ENCODE measurements at regions of chr6 and their contacts with region 1.

Region 1: DNA sequence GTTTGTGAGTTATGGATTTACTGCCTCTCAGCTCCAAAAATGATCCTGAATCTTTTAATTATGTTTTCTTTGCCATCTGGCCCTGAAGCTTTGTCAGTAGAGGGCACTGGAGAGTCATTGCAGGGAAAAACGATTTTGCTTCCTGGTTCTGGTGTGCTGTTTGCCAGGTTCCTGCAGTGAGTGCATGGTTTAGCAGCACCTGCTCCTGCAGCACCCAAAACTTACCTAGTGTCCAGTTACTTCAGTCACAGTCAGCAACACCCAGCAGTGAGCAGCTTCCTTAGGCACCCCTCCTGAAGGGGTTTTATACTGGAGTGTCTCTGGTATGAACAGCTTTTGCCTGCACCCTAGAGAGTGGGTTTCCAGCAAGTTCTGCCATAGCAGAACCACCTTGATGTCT is 6.0 kb upstream of the TRIM26 start:
- DNase-seq: peak; percentile 7 to 79 (median 49)
- ATAC-seq: peak; percentile 68
- H3K4me3 ChIP-seq: no peak overlapping the region
- H3K4me3 Mint-ChIP-seq: no peak overlapping the region
- H3K27ac ChIP-seq: no peak overlapping the region
- H3K27ac Mint-ChIP-seq: peak overlapping the region; percentile 34
- H3K4me1 ChIP-seq: peaks cover 8% of the 10 kb centered on the region
- H3K4me1 Mint-ChIP-seq: peaks cover 18% of the 10 kb centered on the region
- H3K27me3 ChIP-seq: no peaks in the 10 kb centered on the region
- H3K27me3 Mint-ChIP-seq: no peaks in the 10 kb centered on the region
- CTCF ChIP-seq: peak; percentile 91

Region 2: GRCh38 chr6:30206799-30207618 is 12.2 kb before region 1 on chr6:
- CTCF ChIA-PET with region 1: interaction called, 41 read pairs
- POLR2A ChIA-PET with region 1: interaction called, 8 read pairs
- intact Hi-C with region 1: no loop called
- DNase-seq: no peak
- ATAC-seq: no peak
- H3K4me3 ChIP-seq: no peak overlapping the region
- H3K4me3 Mint-ChIP-seq: no peak overlapping the region
- H3K27ac ChIP-seq: no peak overlapping the region
- H3K27ac Mint-ChIP-seq: peak overlapping the region; percentile 18
- H3K4me1 ChIP-seq: peaks cover 41% of the 10 kb centered on the region
- H3K4me1 Mint-ChIP-seq: peaks cover 81% of the 10 kb centered on the region
- H3K27me3 ChIP-seq: no peaks in the 10 kb centered on the region
- H3K27me3 Mint-ChIP-seq: no peaks in the 10 kb centered on the region
- CTCF ChIP-seq: no peak

Region 3: GRCh38 chr6:30238174-30238795 is 19.0 kb after region 1 on chr6:
- CTCF ChIA-PET with region 1: interaction called, 15 read pairs
- POLR2A ChIA-PET with region 1: interaction called, 3 read pairs
- intact Hi-C with region 1: no loop called
- DNase-seq: peak in 5 of 9 experiments; percentile 18 to 69 (median 31)
- ATAC-seq: peak; percentile 63
- H3K4me3 ChIP-seq: no peak overlapping the region
- H3K4me3 Mint-ChIP-seq: no peak overlapping the region
- H3K27ac ChIP-seq: no peak overlapping the region
- H3K27ac Mint-ChIP-seq: no peak overlapping the region
- H3K4me1 ChIP-seq: no peaks in the 10 kb centered on the region
- H3K4me1 Mint-ChIP-seq: no peaks in the 10 kb centered on the region
- H3K27me3 ChIP-seq: no peaks in the 10 kb centered on the region
- H3K27me3 Mint-ChIP-seq: peaks cover 32% of the 10 kb centered on the region
- CTCF ChIP-seq: peak; percentile 40

Region 4: DNA sequence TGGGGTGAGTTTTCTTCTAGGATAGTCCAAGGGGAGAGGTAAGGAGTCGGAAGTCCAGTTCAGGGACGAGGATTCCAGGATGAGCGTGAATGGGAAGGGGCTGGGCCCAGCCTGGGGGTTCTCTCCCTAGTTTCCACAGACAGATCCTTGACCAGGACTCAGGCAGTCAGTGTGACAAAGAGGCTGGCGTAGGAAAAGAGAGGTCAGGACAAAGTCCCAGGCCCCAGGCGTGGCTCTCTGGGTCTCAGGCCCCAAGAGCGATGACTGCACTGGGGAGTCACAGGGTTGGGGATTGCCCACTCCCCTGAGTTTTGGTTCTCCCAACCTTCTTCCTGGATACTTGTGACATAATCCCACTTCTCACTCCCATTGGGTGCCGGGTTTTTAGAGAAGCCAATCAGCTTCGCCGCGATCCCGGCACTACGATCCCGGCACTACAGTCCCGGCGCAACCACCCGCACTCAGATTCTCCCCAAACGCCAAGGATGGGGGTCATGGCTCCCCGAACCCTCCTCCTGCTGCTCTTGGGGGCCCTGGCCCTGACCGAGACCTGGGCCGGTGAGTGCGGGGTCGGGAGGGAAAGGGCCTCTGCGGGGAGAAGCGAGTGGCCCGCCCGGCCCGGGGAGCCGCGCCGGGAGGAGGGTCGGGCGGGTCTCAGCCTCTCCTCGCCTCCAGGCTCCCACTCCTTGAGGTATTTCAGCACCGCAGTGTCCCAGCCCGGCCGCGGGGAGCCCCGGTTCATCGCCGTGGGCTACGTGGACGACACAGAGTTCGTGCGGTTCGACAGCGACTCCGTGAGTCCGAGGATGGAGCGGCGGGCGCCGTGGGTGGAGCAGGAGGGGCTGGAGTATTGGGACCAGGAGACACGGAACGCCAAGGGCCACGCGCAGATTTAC is 40.1 kb after region 1 on chr6:
- CTCF ChIA-PET with region 1: interaction called, 6 read pairs
- POLR2A ChIA-PET with region 1: no interaction called
- intact Hi-C with region 1: loop called (anchors 1 to 2 kb)
- DNase-seq: peak; percentile 24 to 91 (median 60)
- ATAC-seq: peak; percentile 84
- H3K4me3 ChIP-seq: peak overlapping the region; percentile 78 to 88
- H3K4me3 Mint-ChIP-seq: peak overlapping the region; percentile 92
- H3K27ac ChIP-seq: peak overlapping the region; percentile 53 to 77
- H3K27ac Mint-ChIP-seq: peak overlapping the region; percentile 80
- H3K4me1 ChIP-seq: peaks cover 6% of the 10 kb centered on the region
- H3K4me1 Mint-ChIP-seq: peaks cover 19% of the 10 kb centered on the region
- H3K27me3 ChIP-seq: no peaks in the 10 kb centered on the region
- H3K27me3 Mint-ChIP-seq: no peaks in the 10 kb centered on the region
- CTCF ChIP-seq: peak; percentile 23

Region 5: GRCh38 chr6:30357678-30358540 is 138.7 kb after region 1 on chr6:
- CTCF ChIA-PET with region 1: interaction called, 10 read pairs
- POLR2A ChIA-PET with region 1: no interaction called
- intact Hi-C with region 1: no loop called
- DNase-seq: peak in 8 of 9 experiments; percentile 16 to 81 (median 56)
- ATAC-seq: peak; percentile 88
- H3K4me3 ChIP-seq: peak overlapping the region; percentile 41 to 47
- H3K4me3 Mint-ChIP-seq: peak overlapping the region; percentile 87
- H3K27ac ChIP-seq: no peak overlapping the region
- H3K27ac Mint-ChIP-seq: no peak overlapping the region
- H3K4me1 ChIP-seq: peaks cover 4% of the 10 kb centered on the region
- H3K4me1 Mint-ChIP-seq: peaks cover 4% of the 10 kb centered on the region
- H3K27me3 ChIP-seq: peaks cover 0 to 10% of the 10 kb centered on the region in 2 experiments
- H3K27me3 Mint-ChIP-seq: peaks cover 46% of the 10 kb centered on the region
- CTCF ChIP-seq: peak; percentile 68

Region 6: GRCh38 chr6:30396833-30397479 is 177.7 kb after region 1 on chr6:
- CTCF ChIA-PET with region 1: interaction called, 52 read pairs
- POLR2A ChIA-PET with region 1: interaction called, 3 read pairs
- intact Hi-C with region 1: loop called (anchors 1 kb)
- DNase-seq: peak; percentile 65 to 92 (median 87)
- ATAC-seq: peak; percentile 99
- H3K4me3 ChIP-seq: no peak overlapping the region
- H3K4me3 Mint-ChIP-seq: no peak overlapping the region
- H3K27ac ChIP-seq: no peak overlapping the region
- H3K27ac Mint-ChIP-seq: no peak overlapping the region
- H3K4me1 ChIP-seq: peaks cover 4% of the 10 kb centered on the region
- H3K4me1 Mint-ChIP-seq: peaks cover 4% of the 10 kb centered on the region
- H3K27me3 ChIP-seq: peaks cover 0 to 10% of the 10 kb centered on the region in 2 experiments
- H3K27me3 Mint-ChIP-seq: peaks cover 26% of the 10 kb centered on the region
- CTCF ChIP-seq: peak; percentile 94